Naive thymus-derived CD4-positive, alpha-beta T cell (primary cell): ENCODE measurements at regions of chr1 and their contacts with region 1.

Region 1: GRCh38 chr1:241677201-241677600 is 25.1 kb downstream of the WDR64 start:
- DNase-seq: peak in 8 of 9 donors; percentile 23 to 83 (median 75)
- ATAC-seq: peak; percentile 97
- H3K4me3 ChIP-seq: peak overlapping the region; percentile 28
- H3K4me3 Mint-ChIP-seq: peak overlapping the region; percentile 53 to 88 (median 76)
- H3K27ac ChIP-seq: peak overlapping the region; percentile 55
- H3K27ac Mint-ChIP-seq: peak overlapping the region; percentile 85 to 97 (median 90)
- H3K4me1 ChIP-seq: peaks cover 8 to 21% of the 10 kb centered on the region in 2 donors
- H3K4me1 Mint-ChIP-seq: peaks cover 4 to 30% (median 20%) of the 10 kb centered on the region in 7 donors
- H3K27me3 ChIP-seq: no peaks in the 10 kb centered on the region
- H3K27me3 Mint-ChIP-seq: peaks cover 0 to 6% (median 0%) of the 10 kb centered on the region in 5 donors

Region 2: DNA sequence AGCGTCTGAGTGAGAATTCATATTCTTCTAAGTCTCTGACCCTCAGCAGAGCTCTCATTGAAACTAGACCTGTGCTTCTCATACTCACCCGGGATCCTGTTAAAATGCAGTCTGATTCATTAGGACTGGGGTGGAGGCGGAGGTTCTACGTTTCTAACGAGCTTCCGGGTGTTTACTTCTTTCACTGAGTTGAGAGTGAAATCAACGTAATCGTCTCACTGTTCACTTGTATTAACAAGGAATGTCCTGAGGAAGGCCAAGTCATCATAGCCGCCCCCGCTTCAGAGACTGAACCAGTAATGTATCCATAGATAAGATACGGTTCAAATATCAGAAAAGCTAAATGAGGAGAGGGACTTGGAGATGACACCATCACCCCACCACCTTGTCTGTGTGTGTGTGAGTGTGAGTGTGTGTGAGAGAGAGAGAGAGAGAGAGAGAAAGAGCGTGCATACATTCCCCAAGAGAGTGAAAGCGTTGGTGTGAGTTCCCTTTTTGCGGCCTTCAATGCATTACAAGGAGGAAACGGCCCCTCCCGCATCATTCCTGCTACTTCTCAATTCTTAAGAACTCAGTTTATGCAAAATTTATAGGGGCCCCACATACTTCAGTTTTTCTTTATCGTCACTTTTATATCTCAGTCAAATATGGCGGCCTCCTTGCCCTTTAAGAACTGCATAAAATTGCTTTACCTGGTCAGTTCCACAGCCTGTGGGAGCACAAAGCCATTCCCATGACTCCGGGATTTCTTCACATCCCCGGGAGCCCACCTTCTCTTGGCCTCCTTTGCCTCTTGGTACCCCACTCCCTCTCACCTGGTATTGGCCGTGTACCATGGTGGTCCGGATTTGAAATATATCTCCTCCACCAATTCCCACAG is 125.2 kb before region 1 on chr1:
- CTCF ChIA-PET with region 1: no interaction called
- POLR2A ChIA-PET with region 1: interaction called, 7 read pairs
- intact Hi-C with region 1: loop called in 1 of 2 experiments (anchors 2 kb)
- DNase-seq: peak; percentile 25 to 72 (median 61)
- ATAC-seq: peak; percentile 91
- H3K4me3 ChIP-seq: peak overlapping the region; percentile 49
- H3K4me3 Mint-ChIP-seq: peak overlapping the region; percentile 83 to 93 (median 88)
- H3K27ac ChIP-seq: peak overlapping the region; percentile 55
- H3K27ac Mint-ChIP-seq: peak overlapping the region; percentile 93 to 98 (median 96)
- H3K4me1 ChIP-seq: peaks cover 0 to 14% of the 10 kb centered on the region in 2 donors
- H3K4me1 Mint-ChIP-seq: peaks cover 14 to 36% (median 25%) of the 10 kb centered on the region in 7 donors
- H3K27me3 ChIP-seq: no peaks in the 10 kb centered on the region
- H3K27me3 Mint-ChIP-seq: peaks cover 0 to 5% (median 0%) of the 10 kb centered on the region in 5 donors

Region 3: DNA sequence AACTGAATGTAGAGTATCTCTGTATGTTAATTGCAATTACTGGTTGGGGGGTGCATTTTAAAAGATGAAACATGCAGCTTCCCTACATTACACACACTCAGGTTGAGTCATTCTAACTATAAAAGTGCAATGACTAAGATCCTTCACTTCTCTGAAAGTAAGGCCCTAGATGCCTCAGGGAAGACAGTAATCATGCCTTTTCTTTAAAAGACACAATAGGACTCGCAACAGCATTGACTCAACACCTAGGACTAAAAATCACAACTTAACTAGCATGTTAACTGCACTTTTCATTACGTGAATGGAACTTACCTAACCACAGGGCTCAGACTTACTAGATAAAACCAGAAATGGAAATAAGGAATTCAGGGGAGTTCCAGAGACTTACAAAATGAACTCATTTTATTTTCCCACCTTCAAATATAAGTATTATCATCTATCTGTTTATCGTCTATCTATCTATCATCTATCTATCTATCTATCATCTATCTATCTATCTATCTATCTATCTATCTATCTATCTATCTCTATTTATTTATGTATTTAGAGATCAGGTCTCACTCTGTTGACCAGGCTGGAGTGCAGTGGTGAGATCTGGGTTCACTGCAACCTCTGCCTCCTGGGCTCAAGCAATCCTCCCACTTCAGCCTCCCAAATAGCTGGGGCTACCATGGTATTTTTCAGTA is 84.8 kb before region 1 on chr1:
- CTCF ChIA-PET with region 1: no interaction called
- POLR2A ChIA-PET with region 1: no interaction called
- intact Hi-C with region 1: no loop called
- DNase-seq: no peak
- ATAC-seq: peak; percentile 81
- H3K4me3 ChIP-seq: no peak overlapping the region
- H3K4me3 Mint-ChIP-seq: no peak overlapping the region
- H3K27ac ChIP-seq: no peak overlapping the region
- H3K27ac Mint-ChIP-seq: no peak overlapping the region
- H3K4me1 ChIP-seq: no peaks in the 10 kb centered on the region
- H3K4me1 Mint-ChIP-seq: peaks cover 0 to 10% (median 0%) of the 10 kb centered on the region in 7 donors
- H3K27me3 ChIP-seq: no peaks in the 10 kb centered on the region
- H3K27me3 Mint-ChIP-seq: no peaks in the 10 kb centered on the region

Region 4: GRCh38 chr1:241640029-241640818 is 37.0 kb before region 1 on chr1 and contains the starts of genes CHML and OPN3:
- CTCF ChIA-PET with region 1: no interaction called
- POLR2A ChIA-PET with region 1: interaction called, 5 read pairs
- intact Hi-C with region 1: loop called (anchors 1 kb)
- DNase-seq: peak; percentile 79 to 98 (median 85)
- ATAC-seq: peak; percentile 97
- H3K4me3 ChIP-seq: peak within 1 kb of the TSS; percentile 84
- H3K4me3 Mint-ChIP-seq: peak within 1 kb of the TSS; percentile 79 to 92 (median 90)
- H3K27ac ChIP-seq: peak within 1 kb of the TSS; percentile 82
- H3K27ac Mint-ChIP-seq: peak within 1 kb of the TSS; percentile 83 to 97 (median 91)
- H3K4me1 ChIP-seq: peaks cover 0 to 20% of the 10 kb centered on the region in 2 donors
- H3K4me1 Mint-ChIP-seq: peaks cover 25 to 47% (median 45%) of the 10 kb centered on the region in 7 donors
- H3K27me3 ChIP-seq: no peaks in the 10 kb centered on the region
- H3K27me3 Mint-ChIP-seq: no peaks in the 10 kb centered on the region
- total RNA-seq, gene CHML: 11.4 to 18.3 (median 14.0) TPM
- total RNA-seq, gene OPN3: 3.6 to 11.5 (median 10.4) TPM

Region 5: DNA sequence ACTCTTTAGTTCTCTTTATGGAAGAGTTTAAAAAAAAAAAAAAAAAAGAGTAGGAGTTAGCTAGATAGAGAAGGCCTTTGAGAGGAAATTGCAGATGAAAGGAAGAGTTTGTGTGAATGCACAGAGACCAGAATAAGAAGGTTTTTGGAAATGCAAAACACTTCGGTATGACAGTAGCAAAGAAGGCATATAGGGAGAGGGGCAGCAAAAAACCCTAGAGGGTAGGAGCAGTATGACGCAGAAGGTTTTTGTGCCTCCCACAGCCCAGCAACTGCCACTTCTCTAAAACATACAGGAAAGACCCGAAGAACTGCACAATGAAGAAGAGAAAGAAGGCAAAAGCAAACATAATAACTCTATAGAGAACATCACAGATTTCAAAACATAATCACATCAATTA is 59.2 kb after region 1 on chr1:
- CTCF ChIA-PET with region 1: no interaction called
- POLR2A ChIA-PET with region 1: no interaction called
- intact Hi-C with region 1: loop called in 1 of 2 experiments (anchors 5 kb)
- DNase-seq: no peak
- ATAC-seq: no peak
- H3K4me3 ChIP-seq: no peak overlapping the region
- H3K4me3 Mint-ChIP-seq: peak overlapping the region in 3 of 10 donors; percentile 2 to 29 (median 24)
- H3K27ac ChIP-seq: no peak overlapping the region
- H3K27ac Mint-ChIP-seq: peak overlapping the region in 3 of 9 donors; percentile 19 to 85 (median 76)
- H3K4me1 ChIP-seq: no peaks in the 10 kb centered on the region
- H3K4me1 Mint-ChIP-seq: peaks cover 0 to 13% (median 7%) of the 10 kb centered on the region in 7 donors
- H3K27me3 ChIP-seq: no peaks in the 10 kb centered on the region
- H3K27me3 Mint-ChIP-seq: peaks cover 0 to 6% (median 0%) of the 10 kb centered on the region in 5 donors

Region 6: GRCh38 chr1:241847796-241848685 is 170.8 kb after region 1 on chr1 and contains the start of gene EXO1:
- CTCF ChIA-PET with region 1: no interaction called
- POLR2A ChIA-PET with region 1: no interaction called
- intact Hi-C with region 1: loop called in 1 of 2 experiments (anchors 1 kb)
- DNase-seq: peak; percentile 84 to 92 (median 89)
- ATAC-seq: peak; percentile 99
- H3K4me3 ChIP-seq: peak within 1 kb of the TSS; percentile 96
- H3K4me3 Mint-ChIP-seq: peak within 1 kb of the TSS; percentile 87 to 99 (median 96)
- H3K27ac ChIP-seq: peak within 1 kb of the TSS; percentile 96
- H3K27ac Mint-ChIP-seq: peak within 1 kb of the TSS; percentile 95 to 99 (median 99)
- H3K4me1 ChIP-seq: peaks cover 6 to 12% of the 10 kb centered on the region in 2 donors
- H3K4me1 Mint-ChIP-seq: peaks cover 7 to 42% (median 17%) of the 10 kb centered on the region in 7 donors
- H3K27me3 ChIP-seq: no peaks in the 10 kb centered on the region
- H3K27me3 Mint-ChIP-seq: peaks cover 0 to 8% (median 0%) of the 10 kb centered on the region in 5 donors
- total RNA-seq, gene EXO1: 0.11 to 29.8 (median 1.0) TPM